ENCODE measurements at regions of chr2 and their contacts with region 1.

Region 1: GRCh38 chr2:182066400-182067087 is 80.9 kb downstream of the PPP1R1C start:
- DNase-seq: no peak
- H3K4me3 ChIP-seq: no peak overlapping the region
- H3K27ac ChIP-seq: no peak overlapping the region
- H3K4me1 ChIP-seq: no peaks in the 10 kb centered on the region
- H3K27me3 ChIP-seq: no peaks in the 10 kb centered on the region
- CTCF ChIP-seq: no peak
- POLR2A ChIP-seq: no peak

Region 2: DNA sequence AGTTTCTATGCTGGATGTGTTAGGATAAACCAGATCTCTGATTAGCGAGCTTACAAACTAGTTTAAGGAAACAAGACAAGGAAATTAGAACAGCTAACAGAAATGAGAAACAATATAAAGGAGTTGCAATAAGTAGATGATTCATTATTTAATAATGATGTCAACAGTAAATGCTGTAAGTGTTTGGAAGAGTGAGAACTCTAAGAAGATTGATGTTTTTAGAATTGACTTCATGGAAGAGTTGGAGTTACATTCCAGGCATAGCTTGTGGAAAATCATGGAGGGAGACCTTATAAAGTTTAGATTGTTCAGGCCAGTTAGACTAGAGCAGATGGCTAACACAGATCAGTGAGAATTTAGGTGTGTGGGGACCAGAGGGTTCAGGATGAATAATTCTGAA is 48.3 kb before region 1 on chr2:
- intact Hi-C with region 1: loop called (anchors 10 kb)
- DNase-seq: no peak
- H3K4me3 ChIP-seq: no peak overlapping the region
- H3K27ac ChIP-seq: no peak overlapping the region
- H3K4me1 ChIP-seq: no peaks in the 10 kb centered on the region
- H3K27me3 ChIP-seq: no peaks in the 10 kb centered on the region
- CTCF ChIP-seq: no peak
- POLR2A ChIP-seq: no peak

Region 3: DNA sequence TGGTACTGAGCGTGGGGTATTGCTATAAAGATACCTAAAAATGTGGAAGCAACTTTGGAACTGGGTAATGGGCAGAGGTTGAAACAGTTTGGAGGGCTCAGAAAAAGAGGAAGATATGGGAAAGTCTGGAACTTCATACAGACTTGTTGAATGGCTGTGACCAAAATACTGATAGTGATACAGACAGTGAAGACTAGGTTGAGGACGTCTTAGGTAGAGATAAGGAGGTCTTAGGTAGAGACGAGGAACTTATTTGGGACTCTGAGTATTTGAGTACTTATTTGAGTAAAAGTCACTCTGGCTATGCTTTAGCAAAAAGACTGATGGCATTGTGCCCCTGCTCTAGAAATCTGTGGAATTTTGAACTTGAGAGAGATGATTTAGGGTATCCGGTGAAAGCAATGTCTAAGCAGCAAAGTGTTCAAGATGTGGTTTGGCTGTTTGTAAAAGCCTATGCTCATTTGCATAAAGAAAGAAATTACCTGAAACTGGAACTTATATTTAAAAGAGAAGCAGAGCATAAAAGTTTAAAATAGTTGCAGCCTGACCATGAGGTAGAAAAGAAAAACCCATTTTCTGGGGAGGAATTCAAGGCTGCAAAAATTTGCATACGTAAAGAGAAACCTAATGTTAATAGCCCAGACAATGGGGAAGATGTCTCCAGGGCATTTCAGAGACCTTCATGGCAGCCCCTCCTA is 140.7 kb after region 1 on chr2:
- intact Hi-C with region 1: no loop called
- DNase-seq: no peak
- H3K4me3 ChIP-seq: no peak overlapping the region
- H3K27ac ChIP-seq: no peak overlapping the region
- H3K4me1 ChIP-seq: no peaks in the 10 kb centered on the region
- H3K27me3 ChIP-seq: no peaks in the 10 kb centered on the region
- CTCF ChIP-seq: no peak
- POLR2A ChIP-seq: no peak

Region 4: DNA sequence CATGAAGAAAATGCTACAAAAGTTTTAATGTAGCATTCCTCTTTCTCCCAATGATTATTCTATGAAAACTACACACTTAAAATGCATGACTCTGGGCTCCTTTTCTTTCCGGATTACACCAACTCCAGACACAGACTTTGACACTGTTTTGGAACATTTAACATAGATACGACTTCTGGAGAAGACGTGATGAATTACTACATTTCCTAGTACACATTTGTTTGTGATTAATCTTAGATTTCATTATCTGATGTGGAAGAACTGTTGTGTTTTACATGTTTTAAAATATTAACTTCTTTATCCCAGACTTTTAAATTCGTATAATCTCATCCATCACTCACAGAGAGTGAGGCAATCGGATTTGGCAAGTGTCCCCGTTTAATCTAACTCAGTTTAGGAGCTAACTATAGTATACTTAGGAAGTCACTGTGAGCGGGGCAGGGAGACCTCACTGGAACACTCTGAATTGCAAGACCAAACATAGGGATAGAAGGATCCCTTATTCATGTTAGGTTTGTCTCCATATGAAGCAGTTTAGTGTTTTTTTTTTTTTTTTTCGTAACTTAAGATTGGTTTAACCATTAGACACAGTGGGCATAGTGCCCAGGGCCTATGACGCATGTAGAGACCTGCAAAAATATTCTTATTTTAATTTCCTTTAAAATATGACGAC is 293.6 kb after region 1 on chr2:
- intact Hi-C with region 1: no loop called
- DNase-seq: no peak
- H3K4me3 ChIP-seq: no peak overlapping the region
- H3K27ac ChIP-seq: no peak overlapping the region
- H3K4me1 ChIP-seq: no peaks in the 10 kb centered on the region
- H3K27me3 ChIP-seq: no peaks in the 10 kb centered on the region
- CTCF ChIP-seq: no peak
- POLR2A ChIP-seq: no peak

Region 5: DNA sequence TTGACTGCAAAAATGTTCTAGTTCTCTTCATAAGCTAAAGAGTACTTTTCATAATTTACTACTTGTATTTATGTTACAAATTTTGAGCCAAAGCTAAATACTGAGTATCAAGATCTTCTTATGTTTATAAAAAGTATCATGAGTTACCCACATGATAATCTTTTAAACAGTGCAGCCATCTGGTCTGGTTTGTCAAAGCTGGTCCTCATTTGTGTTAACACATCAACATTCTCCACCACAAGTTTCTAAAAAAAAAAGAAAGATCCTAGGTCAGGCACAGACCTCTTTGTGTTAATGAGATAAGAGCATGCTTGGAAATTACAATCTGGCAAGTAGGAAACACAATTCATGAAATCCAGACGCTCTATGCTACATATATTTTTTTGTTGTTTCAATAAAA is 875.4 kb after region 1 on chr2:
- intact Hi-C with region 1: no loop called
- DNase-seq: no peak
- H3K4me3 ChIP-seq: no peak overlapping the region
- H3K27ac ChIP-seq: no peak overlapping the region
- H3K4me1 ChIP-seq: no peaks in the 10 kb centered on the region
- H3K27me3 ChIP-seq: no peaks in the 10 kb centered on the region
- CTCF ChIP-seq: no peak
- POLR2A ChIP-seq: no peak

Measured in prostate gland (tissue), 2 donors.